Sigmoid colon (tissue), 7 donors: ENCODE measurements at regions of chr14 and their contacts with region 1.

Region 1: DNA sequence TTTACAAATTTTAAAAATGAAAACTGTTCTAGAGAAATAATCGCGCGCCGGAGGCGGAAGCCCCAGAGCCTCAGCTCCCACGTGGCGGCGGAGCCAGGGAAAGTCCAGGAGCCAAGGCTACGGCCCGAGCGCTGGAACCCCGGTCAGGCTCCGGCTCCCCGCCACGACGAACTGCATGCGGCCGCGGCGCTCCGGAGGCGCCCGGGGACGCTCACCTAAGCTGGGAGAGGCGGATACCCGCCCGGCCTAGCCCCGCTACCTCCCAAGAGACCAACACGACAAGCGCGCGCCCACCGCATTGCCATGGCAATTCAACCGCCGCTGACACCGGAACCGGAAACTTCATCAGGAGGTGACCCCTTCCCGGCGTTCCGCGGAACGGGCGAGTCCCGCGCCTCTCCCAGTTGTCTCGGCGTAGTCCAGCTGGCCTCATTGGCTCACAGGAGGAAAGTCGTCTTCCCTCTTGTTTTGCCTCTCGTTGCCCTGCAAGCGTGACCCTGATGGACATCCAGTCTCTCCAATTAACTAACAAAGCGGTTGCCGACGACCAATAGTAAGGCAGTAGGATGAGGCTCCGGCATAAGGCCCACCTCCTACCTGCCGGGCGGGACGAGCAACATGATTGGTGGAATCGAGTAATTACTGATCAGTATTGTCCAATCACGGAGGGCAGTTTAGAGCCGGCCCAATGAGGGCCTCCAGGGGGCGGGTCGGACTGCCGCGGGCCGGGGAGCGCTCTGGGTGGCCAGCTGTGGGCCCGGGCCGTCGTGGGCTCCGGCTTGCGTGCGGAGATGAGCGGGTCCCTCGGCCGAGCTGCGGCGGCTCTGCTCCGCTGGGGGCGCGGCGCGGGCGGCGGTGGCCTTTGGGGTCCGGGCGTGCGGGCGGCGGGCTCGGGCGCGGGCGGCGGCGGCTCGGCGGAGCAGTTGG is at the start of gene GLRX5:
- DNase-seq: peak; percentile 100
- H3K4me3 ChIP-seq: peak within 1 kb of the TSS; percentile 85 to 100 (median 94)
- H3K27ac ChIP-seq: peak within 1 kb of the TSS; percentile 82 to 91 (median 87)
- H3K4me1 ChIP-seq: peaks cover 0 to 58% (median 50%) of the 10 kb centered on the region in 4 donors
- H3K27me3 ChIP-seq: no peaks in the 10 kb centered on the region
- CTCF ChIP-seq: no peak
- EP300 ChIP-seq: no peak
- POLR2A ChIP-seq: no peak
- total RNA-seq, gene GLRX5: 30.5 to 61.4 (median 44.3) TPM

Region 2: DNA sequence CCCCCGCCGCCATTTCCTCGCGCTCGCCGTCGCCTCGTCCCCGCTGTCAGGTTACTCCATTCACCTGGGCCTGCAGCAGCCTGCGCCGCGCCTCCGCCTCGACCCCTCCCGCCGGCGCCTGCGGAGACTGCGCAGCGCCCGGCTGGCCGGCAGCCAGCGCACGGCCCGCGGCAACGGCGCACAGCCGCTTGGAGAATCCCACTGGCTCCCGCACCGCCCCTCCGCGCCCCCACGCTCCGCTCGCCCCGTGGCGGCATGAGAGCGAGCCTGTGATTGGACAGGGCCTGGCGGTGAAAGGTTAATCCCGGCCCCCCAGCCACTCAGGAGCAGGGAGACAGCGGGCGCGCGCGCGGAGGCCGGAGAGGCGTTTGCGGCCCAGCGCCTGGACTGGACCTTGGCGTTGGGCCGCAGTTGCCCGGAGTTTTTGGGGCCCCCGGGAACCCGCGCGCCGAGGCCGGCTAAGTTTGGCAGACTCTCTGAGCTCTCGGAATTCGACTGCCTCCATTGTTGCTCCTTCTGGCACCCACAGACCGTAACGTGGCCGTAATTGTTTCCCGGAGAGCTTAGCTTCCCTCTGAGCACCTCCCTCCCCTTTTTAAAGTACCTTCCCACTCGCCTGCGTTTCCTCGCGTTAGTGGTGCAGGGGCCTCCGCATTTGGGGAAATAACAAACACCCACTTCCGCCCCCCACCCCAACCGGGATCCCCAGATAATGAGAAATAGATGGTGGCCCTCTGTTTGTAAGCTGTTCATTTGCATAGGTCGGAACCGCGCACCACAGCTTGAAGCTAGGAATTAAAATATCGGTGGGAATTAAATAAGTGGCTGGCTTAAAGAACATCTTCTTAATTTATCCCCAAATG is 377.0 kb before region 1 on chr14 and contains the start of gene DICER1:
- intact Hi-C with region 1: loop called (anchors 10 kb)
- DNase-seq: peak; percentile 98
- H3K4me3 ChIP-seq: peak within 1 kb of the TSS; percentile 77 to 92 (median 86)
- H3K27ac ChIP-seq: peak within 1 kb of the TSS; percentile 87 to 96 (median 92)
- H3K4me1 ChIP-seq: peaks cover 0 to 51% (median 37%) of the 10 kb centered on the region in 4 donors
- H3K27me3 ChIP-seq: no peaks in the 10 kb centered on the region
- CTCF ChIP-seq: no peak
- EP300 ChIP-seq: no peak
- POLR2A ChIP-seq: peak in 1 of 2 donors; percentile 67
- total RNA-seq, gene DICER1: 44.9 to 77.0 (median 51.1) TPM

Region 3: GRCh38 chr14:96281486-96281885 is 746.9 kb after region 1 on chr14:
- intact Hi-C with region 1: loop called (anchors 10 kb)
- DNase-seq: no peak
- H3K4me3 ChIP-seq: no peak overlapping the region
- H3K27ac ChIP-seq: peak overlapping the region in 3 of 4 donors; percentile 17 to 58 (median 47)
- H3K4me1 ChIP-seq: peaks cover 0 to 30% (median 22%) of the 10 kb centered on the region in 4 donors
- H3K27me3 ChIP-seq: no peaks in the 10 kb centered on the region
- CTCF ChIP-seq: no peak
- EP300 ChIP-seq: peak in 2 of 4 donors; percentile 41 to 79
- POLR2A ChIP-seq: no peak

Region 4: GRCh38 chr14:96362965-96363756 is 828.6 kb after region 1 on chr14 and contains the starts of genes ATG2B and GSKIP:
- intact Hi-C with region 1: loop called (anchors 10 kb)
- DNase-seq: peak; percentile 96
- H3K4me3 ChIP-seq: peak within 1 kb of the TSS; percentile 74 to 98 (median 98)
- H3K27ac ChIP-seq: peak within 1 kb of the TSS; percentile 90 to 98 (median 98)
- H3K4me1 ChIP-seq: peaks cover 0 to 46% (median 35%) of the 10 kb centered on the region in 4 donors
- H3K27me3 ChIP-seq: no peaks in the 10 kb centered on the region
- CTCF ChIP-seq: no peak
- EP300 ChIP-seq: no peak
- POLR2A ChIP-seq: peak; percentile 56 to 60
- total RNA-seq, gene ATG2B: 17.9 to 27.1 (median 25.0) TPM
- total RNA-seq, gene GSKIP: 13.2 to 30.7 (median 19.3) TPM